ENCODE measurements at regions of chr16 and their contacts with region 1.

Region 1: DNA sequence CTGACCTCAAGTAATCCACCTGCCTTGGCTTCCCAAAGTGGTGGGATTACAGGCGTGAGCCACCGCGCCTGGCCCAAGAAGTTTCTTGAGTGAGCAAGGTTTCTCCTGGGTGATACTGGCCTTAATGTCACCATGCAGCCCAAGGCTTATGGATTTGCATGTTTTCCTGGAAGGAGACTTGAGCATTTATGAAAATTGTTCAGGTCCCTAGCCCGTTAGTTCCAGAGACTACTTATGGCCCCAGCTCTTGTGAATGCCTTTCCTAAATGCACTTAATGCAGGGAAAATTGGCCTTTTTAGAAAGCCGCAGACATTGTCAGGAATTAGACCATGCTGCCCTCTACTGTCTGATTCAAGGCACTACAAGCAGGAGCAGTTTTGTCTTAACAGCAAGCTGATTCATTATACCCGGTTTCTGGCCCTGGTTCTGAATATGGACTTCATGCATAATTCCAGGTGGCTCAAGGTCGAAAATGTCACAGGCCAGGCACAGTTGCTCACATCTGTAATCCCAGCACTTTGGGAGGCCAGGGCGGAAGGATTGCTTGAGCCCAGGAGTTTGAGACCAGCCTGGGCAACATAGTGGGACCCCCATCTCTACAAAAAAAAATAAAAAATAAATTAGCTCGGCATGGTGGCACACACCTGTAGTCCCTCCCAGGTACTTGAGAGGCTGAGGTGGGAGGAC is 91.3 kb downstream of the SNX29 start:
- DNase-seq: peak; percentile 80
- H3K4me3 Mint-ChIP-seq: no peak overlapping the region
- H3K27ac Mint-ChIP-seq: no peak overlapping the region
- H3K4me1 Mint-ChIP-seq: peaks cover 1% of the 10 kb centered on the region
- H3K27me3 Mint-ChIP-seq: no peaks in the 10 kb centered on the region
- CTCF ChIP-seq: peak; percentile 90

Region 2: DNA sequence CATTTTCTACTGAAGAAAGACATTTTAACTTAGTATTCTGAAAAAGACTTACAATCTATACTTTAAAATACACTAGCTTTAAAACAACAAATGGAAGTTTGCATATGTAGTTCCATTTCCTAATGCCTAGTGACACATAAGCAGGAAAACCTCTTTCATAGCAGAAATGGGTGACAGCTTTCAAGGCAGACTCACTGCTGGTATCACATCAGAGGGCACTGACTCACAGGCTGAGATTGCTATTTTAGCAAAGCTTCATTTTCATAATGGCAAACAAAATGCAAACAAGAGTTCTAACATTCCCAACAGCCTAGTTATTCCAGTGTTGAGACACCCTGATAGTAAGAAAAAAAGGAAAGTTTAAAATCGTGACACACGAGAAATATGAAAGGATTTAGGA is 171.1 kb before region 1 on chr16:
- CTCF ChIA-PET with region 1: interaction called, 11 read pairs
- POLR2A ChIA-PET with region 1: no interaction called
- intact Hi-C with region 1: loop called (anchors 5 kb)
- DNase-seq: peak; percentile 21
- H3K4me3 Mint-ChIP-seq: no peak overlapping the region
- H3K27ac Mint-ChIP-seq: no peak overlapping the region
- H3K4me1 Mint-ChIP-seq: peaks cover 16% of the 10 kb centered on the region
- H3K27me3 Mint-ChIP-seq: no peaks in the 10 kb centered on the region
- CTCF ChIP-seq: no peak

Region 3: DNA sequence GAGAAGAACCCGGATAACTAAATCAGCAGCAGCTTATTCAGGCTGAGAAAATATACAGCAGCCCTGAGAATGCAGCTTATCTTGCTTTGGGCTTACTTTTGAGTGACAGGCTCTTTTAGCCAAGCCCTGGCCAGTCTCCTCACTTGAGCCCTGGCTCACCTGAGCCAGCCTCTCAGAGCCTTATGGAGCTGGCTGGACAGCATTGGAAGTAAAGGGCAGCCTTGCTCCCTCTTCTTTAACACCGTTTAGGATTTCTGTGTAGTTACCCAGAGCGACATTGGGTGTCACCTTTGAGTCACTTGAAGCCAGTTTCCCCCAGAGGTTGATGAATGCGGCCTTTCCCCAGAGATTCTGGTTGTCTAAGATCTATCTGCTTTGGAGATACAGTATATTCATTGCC is 118.3 kb before region 1 on chr16:
- CTCF ChIA-PET with region 1: interaction called, 85 read pairs
- POLR2A ChIA-PET with region 1: no interaction called
- intact Hi-C with region 1: no loop called
- DNase-seq: peak; percentile 56
- H3K4me3 Mint-ChIP-seq: no peak overlapping the region
- H3K27ac Mint-ChIP-seq: no peak overlapping the region
- H3K4me1 Mint-ChIP-seq: no peaks in the 10 kb centered on the region
- H3K27me3 Mint-ChIP-seq: no peaks in the 10 kb centered on the region
- CTCF ChIP-seq: peak; percentile 39

Region 4: DNA sequence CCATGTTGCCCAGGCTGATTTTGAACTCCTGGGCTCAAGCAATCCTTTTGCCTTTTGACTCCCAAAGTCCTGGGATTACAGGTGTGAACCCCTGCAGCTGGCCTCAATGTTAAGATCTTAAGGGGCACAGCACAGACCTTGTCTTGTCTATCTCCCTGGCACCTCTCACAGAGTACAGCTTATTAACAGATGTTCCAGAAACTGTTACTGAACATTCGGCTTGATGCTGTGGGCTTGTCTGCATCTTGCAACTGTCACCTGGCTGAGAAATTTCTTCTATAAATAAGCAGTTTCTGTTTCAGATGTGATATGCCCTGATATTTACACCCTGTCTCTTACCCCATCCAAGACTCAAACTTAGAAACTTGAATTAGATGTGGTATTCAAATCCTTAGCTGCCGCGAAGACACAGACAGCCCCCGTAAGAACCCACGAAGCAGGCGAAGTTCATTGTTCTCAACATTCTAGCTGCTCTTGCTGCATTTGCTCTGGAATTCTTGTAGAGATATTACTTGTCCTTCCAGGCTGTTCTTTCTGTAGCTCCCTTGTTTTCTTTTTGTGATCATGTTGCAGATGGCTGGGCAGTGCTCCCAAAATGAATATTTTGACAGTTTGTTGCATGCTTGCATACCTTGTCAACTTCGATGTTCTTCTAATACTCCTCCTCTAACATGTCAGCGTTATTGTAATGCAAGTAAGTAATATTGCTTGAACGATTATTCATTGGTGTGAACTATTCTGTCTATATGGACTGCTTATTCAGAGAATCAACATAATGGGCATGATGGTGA is 102.9 kb before region 1 on chr16 and contains the start of gene TNFRSF17:
- CTCF ChIA-PET with region 1: interaction called, 44 read pairs
- POLR2A ChIA-PET with region 1: no interaction called
- intact Hi-C with region 1: no loop called
- DNase-seq: no peak
- H3K4me3 Mint-ChIP-seq: no peak within 1 kb of the TSS
- H3K27ac Mint-ChIP-seq: no peak within 1 kb of the TSS
- H3K4me1 Mint-ChIP-seq: peaks cover 6% of the 10 kb centered on the region
- H3K27me3 Mint-ChIP-seq: no peaks in the 10 kb centered on the region
- CTCF ChIP-seq: no peak
- total RNA-seq, gene TNFRSF17: not detected in 2 replicates

Region 5: GRCh38 chr16:11977376-11978041 is 90.3 kb before region 1 on chr16:
- CTCF ChIA-PET with region 1: interaction called, 44 read pairs
- POLR2A ChIA-PET with region 1: interaction called, 41 read pairs
- intact Hi-C with region 1: loop called (anchors 1 kb)
- DNase-seq: peak; percentile 47
- H3K4me3 Mint-ChIP-seq: peak overlapping the region; percentile 87
- H3K27ac Mint-ChIP-seq: peak overlapping the region; percentile 86
- H3K4me1 Mint-ChIP-seq: peaks cover 30% of the 10 kb centered on the region
- H3K27me3 Mint-ChIP-seq: no peaks in the 10 kb centered on the region
- CTCF ChIP-seq: no peak

Region 6: GRCh38 chr16:13168091-13168572 is 1100.3 kb after region 1 on chr16:
- CTCF ChIA-PET with region 1: no interaction called
- POLR2A ChIA-PET with region 1: no interaction called
- intact Hi-C with region 1: no loop called
- DNase-seq: peak; percentile 21
- H3K4me3 Mint-ChIP-seq: no peak overlapping the region
- H3K27ac Mint-ChIP-seq: no peak overlapping the region
- H3K4me1 Mint-ChIP-seq: peaks cover 5% of the 10 kb centered on the region
- H3K27me3 Mint-ChIP-seq: no peaks in the 10 kb centered on the region
- CTCF ChIP-seq: no peak